Right cardiac atrium (tissue), 5 donors: ENCODE measurements at regions of chr12 and their contacts with region 1.

Region 1: DNA sequence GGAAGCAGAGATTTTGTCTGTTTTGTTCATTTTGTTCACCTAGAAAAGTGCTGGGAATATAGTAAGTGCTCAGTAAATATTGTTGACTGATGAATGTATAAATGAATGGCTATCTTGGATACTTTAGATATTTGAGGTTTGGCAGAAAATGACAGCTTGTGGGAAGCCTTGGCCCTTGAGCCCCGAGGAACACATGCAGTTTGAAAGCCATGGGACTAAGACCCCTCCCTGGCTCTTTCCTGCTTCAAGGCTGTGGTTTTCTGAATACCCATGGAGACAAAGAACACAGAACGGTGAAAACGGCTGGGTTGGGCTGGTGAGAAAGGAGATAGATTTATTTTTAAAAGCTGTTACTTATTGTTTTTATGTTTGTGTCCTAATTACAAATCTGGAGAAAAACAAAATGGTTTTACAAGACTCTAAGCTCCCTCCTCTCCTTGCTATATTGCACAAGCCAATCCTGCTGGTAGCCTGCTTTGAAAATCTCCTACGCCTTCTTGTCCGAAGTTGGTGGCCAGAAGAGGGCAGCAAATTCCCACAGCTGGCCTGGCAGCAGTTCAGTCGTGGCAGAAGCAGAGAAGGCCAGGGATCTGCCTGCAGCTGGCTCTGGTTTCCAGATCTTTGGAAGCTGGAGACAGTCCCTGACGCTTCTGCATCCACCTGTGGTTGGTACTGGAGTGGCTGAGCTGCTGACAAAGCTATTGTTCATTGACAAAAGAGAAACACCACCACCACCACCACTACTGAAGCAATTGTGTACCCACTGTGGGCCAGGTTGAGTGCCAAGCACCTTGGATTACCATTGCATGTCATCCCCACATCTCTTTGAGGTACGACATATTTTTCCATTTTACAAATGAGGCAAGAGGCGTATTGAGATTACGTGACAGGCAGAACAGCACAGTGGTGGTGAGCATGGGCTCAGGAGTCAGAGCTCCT is 5.2 kb upstream of the KRT85 start:
- DNase-seq: peak; percentile 86 to 92 (median 90)
- ATAC-seq: peak; percentile 81 to 88
- H3K4me3 ChIP-seq: no peak overlapping the region
- H3K27ac ChIP-seq: no peak overlapping the region
- H3K4me1 ChIP-seq: no peaks in the 10 kb centered on the region
- H3K27me3 ChIP-seq: no peaks in the 10 kb centered on the region

Region 2: GRCh38 chr12:52278541-52279421 is 93.7 kb before region 1 on chr12:
- intact Hi-C with region 1: no loop called
- DNase-seq: peak; percentile 71 to 91 (median 91)
- ATAC-seq: peak; percentile 91 to 92
- H3K4me3 ChIP-seq: no peak overlapping the region
- H3K27ac ChIP-seq: no peak overlapping the region
- H3K4me1 ChIP-seq: no peaks in the 10 kb centered on the region
- H3K27me3 ChIP-seq: no peaks in the 10 kb centered on the region

Region 3: DNA sequence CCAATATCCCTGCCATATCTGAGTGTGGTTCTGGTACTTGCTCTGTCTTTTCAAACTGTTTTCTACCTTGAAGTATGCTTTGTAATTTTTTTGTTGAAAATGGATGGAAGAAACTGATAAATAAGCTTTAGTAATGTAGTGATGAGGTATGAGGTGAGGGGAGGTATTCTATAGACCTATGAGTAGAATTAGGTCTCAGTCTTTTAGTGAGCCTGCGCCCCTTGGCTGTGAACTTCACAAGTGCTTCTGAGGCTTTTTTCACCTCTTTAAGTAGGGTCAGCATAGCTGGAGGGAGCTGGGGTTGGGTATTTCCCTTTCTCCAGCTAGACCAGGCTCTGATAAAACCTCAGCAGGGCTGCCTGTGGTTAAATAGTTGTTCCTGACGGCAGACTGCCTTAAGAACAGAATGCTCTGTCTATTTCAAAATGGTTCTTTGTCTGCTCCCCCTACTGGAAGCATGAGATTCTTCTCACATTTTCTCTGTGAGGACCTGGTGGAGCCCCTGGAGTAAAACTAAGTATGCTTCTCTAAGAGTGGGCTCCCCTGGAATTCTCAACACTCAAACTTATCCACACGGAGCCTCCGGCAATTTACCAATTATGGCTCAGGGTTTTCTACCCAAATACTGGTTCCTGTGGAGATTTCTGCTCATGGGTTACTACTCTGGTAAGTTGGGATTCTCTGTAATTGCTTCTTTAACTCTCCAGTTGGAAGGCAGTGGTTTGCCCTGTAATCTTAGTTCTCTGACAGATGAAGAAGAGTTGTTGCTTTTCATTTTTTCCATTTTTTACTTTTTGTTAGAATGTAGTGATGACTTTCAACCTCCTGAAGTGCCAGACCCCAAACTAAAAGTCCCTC is 134.6 kb after region 1 on chr12:
- intact Hi-C with region 1: loop called in 3 of 4 experiments (anchors 10 kb)
- DNase-seq: no peak
- ATAC-seq: peak; percentile 55 to 75
- H3K4me3 ChIP-seq: no peak overlapping the region
- H3K27ac ChIP-seq: no peak overlapping the region
- H3K4me1 ChIP-seq: peaks cover 2% of the 10 kb centered on the region
- H3K27me3 ChIP-seq: no peaks in the 10 kb centered on the region

Region 4: DNA sequence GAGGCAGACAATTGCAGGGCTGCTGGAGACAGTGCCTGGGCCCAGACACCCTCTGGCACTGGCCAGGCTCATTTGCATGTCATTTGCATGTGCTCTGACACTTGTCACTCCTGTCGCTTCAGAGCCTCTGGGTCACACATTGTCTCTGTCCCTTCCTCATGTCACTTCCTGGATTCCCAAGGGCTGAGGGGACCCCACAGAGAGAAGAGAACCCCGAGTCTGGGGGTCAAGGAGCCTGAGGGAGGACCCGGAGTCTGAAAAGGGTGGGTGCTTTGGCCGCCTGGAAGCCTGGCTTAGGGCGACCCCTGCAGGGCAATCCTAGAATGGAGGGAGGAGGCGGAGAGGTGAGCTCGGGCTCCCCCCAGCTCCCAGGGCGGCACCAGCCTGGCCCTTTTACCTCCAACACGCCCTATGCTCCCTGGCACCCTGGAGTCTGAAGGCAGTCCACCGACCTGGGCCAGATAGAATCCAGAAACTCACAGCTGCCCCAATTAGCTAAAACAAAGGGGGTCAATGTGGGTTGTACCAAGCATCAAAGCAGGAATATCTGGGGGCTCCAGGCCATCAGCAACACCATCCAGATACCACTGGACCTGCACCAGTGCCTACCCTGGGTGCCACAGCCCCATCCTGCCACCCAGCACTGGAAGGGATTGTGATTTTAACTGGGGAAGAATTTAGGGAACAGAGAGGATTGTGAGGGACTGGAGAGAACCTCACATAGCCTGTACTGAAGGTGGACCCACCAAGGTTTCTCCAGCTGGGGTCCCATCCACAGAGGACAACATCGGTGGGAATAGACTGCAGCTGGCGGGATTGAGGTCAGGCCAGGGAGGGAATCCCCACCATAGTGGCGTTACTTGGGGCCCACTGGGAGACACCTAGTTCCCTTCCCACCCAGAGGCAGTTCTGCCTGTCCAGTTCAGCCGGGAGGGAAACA is 498.1 kb after region 1 on chr12:
- intact Hi-C with region 1: loop called in 3 of 4 experiments (anchors 5 kb)
- DNase-seq: peak; percentile 58 to 84 (median 83)
- ATAC-seq: peak in 1 of 2 donors; percentile 22
- H3K4me3 ChIP-seq: no peak overlapping the region
- H3K27ac ChIP-seq: no peak overlapping the region
- H3K4me1 ChIP-seq: peaks cover 6% of the 10 kb centered on the region
- H3K27me3 ChIP-seq: no peaks in the 10 kb centered on the region

Region 5: GRCh38 chr12:52879394-52880351 is 507.2 kb after region 1 on chr12:
- intact Hi-C with region 1: loop called (anchors 2 to 5 kb)
- DNase-seq: peak; percentile 76 to 91 (median 89)
- ATAC-seq: peak; percentile 86
- H3K4me3 ChIP-seq: no peak overlapping the region
- H3K27ac ChIP-seq: no peak overlapping the region
- H3K4me1 ChIP-seq: no peaks in the 10 kb centered on the region
- H3K27me3 ChIP-seq: no peaks in the 10 kb centered on the region

Region 6: DNA sequence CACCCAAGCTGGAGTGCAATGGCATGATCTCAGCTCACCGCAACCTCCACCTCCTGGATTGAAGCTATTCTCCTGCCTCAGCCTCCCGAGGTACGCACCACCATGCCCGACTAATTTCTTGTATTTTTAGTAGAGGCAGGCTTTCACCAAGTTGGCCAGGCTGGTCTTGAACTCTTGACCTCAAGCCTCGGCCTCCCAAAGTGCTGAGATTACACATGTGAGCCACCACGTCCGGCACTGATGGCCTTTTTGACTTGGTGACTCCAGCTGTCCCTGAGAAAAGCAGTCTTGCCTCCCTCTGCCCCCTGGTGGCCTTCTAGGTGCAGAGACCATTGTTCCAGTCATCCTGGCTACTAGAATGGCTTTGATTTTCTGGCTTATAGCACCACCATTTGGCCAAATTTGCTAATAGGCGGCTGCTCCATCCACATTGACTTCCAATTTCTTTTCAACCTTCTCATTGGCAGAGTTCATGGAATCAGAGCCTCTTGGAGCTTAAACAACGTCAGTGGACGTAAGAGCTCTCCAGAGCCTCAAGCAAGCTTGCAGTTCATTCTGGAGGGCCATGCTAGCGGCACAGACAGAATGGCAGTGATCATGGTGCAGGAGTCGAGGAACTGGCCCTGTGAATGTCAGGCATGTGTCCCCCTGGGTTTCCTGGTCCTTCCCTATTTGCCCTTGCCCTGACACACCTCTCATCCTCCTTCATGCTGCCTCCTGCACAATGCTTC is 608.4 kb after region 1 on chr12:
- intact Hi-C with region 1: loop called in 1 of 4 experiments (anchors 5 kb)
- DNase-seq: peak; percentile 90 to 95 (median 91)
- ATAC-seq: peak; percentile 90 to 91
- H3K4me3 ChIP-seq: no peak overlapping the region
- H3K27ac ChIP-seq: no peak overlapping the region
- H3K4me1 ChIP-seq: no peaks in the 10 kb centered on the region
- H3K27me3 ChIP-seq: no peaks in the 10 kb centered on the region